ENCODE measurements at regions of chr11 and their contacts with region 1.

Region 1: GRCh38 chr11:134082990-134083389 is 14.1 kb downstream of the JAM3 start:
- DNase-seq: no peak
- H3K4me3 ChIP-seq: no peak overlapping the region
- H3K27ac ChIP-seq: no peak overlapping the region
- H3K4me1 ChIP-seq: peaks cover 0 to 5% (median 0%) of the 10 kb centered on the region in 4 donors
- H3K27me3 ChIP-seq: no peaks in the 10 kb centered on the region
- CTCF ChIP-seq: no peak
- EP300 ChIP-seq: no peak
- POLR2A ChIP-seq: no peak

Region 2: DNA sequence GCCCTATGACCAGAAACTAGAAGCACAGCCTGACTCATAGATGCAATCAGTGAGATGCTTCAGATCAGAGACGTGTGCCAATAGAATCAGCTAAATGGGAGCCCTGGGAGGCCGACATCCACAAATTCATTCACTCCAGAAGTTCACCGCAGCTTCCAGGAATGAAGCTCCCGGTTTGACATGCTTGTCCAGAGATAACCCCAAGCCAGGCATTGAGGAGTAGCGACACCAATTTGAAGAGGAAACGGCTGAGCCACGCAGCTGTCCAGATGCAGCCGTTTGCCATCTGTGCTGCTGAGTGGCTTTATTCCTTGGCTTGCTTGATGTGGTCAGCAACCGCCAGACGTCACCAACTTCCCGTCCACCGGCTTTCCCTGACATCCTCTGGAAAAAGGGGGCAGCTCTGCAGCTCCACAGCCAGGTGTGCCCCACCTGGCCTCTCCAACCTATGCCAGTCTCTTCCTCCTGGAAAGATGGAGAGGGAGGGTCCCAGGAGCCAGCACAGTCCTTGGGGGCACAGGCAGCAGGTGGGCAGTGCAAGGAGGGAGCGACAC is 426.8 kb before region 1 on chr11:
- intact Hi-C with region 1: no loop called
- DNase-seq: no peak
- H3K4me3 ChIP-seq: no peak overlapping the region
- H3K27ac ChIP-seq: no peak overlapping the region
- H3K4me1 ChIP-seq: no peaks in the 10 kb centered on the region
- H3K27me3 ChIP-seq: peaks cover 0 to 8% (median 0%) of the 10 kb centered on the region in 3 donors
- CTCF ChIP-seq: no peak
- EP300 ChIP-seq: no peak
- POLR2A ChIP-seq: no peak

Region 3: DNA sequence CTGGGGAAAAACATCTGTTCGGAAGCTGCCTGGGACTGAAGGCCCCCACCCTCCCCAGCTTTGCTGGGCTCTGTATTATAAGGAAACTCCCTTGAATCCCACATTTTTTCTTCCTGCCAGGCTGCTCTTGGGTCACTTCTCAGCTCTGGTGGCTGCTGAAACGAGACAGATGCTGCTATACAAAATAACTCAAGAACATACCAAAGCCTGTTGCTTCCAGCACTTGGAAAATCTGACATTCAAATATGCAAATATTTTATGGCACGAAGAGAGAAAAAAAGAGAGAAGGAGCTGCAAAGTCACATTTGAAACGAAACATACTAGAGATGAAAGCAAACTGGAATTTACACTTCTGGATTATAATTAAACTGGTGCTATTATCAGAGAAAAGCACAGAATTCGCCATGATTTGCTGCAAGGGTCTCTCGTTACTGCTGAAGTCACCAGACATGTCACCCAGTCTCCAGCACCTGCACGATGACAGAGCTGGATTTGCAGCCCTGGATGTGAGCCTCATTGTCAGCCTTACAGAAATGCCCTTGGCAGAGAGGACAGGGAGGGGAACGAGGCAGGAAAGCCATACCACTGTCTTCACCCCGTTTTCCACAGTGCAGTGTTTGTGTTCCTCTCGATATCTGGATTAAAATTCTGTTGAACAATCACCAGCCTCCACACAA is 78.4 kb before region 1 on chr11:
- intact Hi-C with region 1: no loop called
- DNase-seq: no peak
- H3K4me3 ChIP-seq: no peak overlapping the region
- H3K27ac ChIP-seq: peak overlapping the region in 3 of 4 donors; percentile 15 to 45 (median 44)
- H3K4me1 ChIP-seq: peaks cover 0 to 25% (median 17%) of the 10 kb centered on the region in 4 donors
- H3K27me3 ChIP-seq: no peaks in the 10 kb centered on the region
- CTCF ChIP-seq: no peak
- EP300 ChIP-seq: no peak
- POLR2A ChIP-seq: no peak

Region 4: DNA sequence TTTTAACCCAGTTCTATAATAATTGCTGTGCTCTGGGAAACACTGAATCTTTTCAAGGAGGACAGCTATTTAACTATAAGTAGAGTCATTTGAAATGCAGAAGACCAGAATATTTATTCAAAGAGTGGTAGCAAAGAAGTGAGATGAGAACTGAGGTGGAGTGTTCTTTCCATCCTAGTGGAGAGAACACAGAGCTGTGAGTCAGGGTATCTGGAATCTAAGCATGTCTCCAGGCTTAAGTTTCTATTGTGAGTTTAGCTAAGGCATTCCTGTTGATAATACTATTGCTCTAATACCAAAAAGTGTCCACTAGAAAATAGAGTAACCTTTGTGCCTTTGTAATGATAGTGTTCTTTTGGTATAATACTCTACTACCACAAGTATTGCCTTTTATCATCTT is 18.3 kb after region 1 on chr11:
- intact Hi-C with region 1: loop called (anchors 2 kb)
- DNase-seq: no peak
- H3K4me3 ChIP-seq: no peak overlapping the region
- H3K27ac ChIP-seq: peak overlapping the region in 1 of 4 donors; percentile 27
- H3K4me1 ChIP-seq: peaks cover 0 to 14% (median 5%) of the 10 kb centered on the region in 4 donors
- H3K27me3 ChIP-seq: no peaks in the 10 kb centered on the region
- CTCF ChIP-seq: no peak
- EP300 ChIP-seq: no peak
- POLR2A ChIP-seq: no peak

Measured in sigmoid colon (tissue), 7 donors.